A673 (cell line): ENCODE measurements at regions of chr10 and their contacts with region 1.

Region 1: DNA sequence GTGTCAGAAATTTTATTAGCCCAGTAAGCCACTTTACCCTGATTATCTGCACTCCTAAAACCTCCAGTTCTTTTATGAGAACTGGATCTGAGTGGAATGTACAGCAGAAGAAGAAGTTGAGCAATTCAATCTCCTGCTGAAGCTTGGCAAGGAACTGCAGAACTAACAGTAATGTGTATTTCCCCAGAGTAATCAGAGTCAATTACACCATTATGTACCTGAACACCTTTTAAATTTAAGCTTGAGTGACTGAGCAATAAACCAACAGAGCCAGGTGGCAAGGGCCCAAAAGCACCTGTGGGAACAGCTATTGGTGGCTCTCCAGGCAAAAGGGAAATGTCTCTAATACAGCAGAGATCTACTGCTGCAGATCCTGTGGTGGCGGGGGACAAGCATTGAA is 40.1 kb upstream of the AKR1C2 start:
- DNase-seq: peak; percentile 48
- H3K4me3 ChIP-seq: no peak overlapping the region
- H3K27ac ChIP-seq: peak overlapping the region; percentile 98
- H3K4me1 ChIP-seq: peaks cover 54% of the 10 kb centered on the region
- H3K27me3 ChIP-seq: no peaks in the 10 kb centered on the region
- CTCF ChIP-seq: no peak

Region 2: DNA sequence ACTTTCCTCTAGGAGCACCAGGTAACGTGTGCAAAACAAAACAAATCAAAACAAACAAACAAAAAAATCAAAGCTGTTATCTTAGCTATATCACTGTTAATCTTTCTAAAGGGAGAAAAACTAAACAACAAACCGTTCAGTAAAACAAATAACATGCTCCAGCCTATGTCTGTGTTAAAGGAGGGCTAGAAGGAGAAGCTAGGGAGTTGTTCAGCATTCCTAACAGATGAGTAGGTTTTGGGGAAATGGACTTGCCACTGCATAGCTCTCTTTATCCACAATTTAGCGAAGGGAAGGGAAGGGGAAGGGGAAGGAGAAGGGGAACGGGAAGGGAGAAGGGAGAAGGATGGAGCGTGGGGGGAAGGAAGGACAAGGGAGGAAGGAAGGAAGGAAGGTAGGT is 351.9 kb before region 1 on chr10:
- CTCF ChIA-PET with region 1: interaction called, 4 read pairs
- POLR2A ChIA-PET with region 1: no interaction called
- intact Hi-C with region 1: loop called (anchors 5 kb)
- DNase-seq: peak; percentile 81
- H3K4me3 ChIP-seq: no peak overlapping the region
- H3K27ac ChIP-seq: peak overlapping the region; percentile 76
- H3K4me1 ChIP-seq: peaks cover 12% of the 10 kb centered on the region
- H3K27me3 ChIP-seq: no peaks in the 10 kb centered on the region
- CTCF ChIP-seq: no peak

Region 3: GRCh38 chr10:4947635-4948596 is 95.8 kb before region 1 on chr10:
- CTCF ChIA-PET with region 1: no interaction called
- POLR2A ChIA-PET with region 1: no interaction called
- intact Hi-C with region 1: no loop called
- DNase-seq: no peak
- H3K4me3 ChIP-seq: no peak overlapping the region
- H3K27ac ChIP-seq: no peak overlapping the region
- H3K4me1 ChIP-seq: peaks cover 8% of the 10 kb centered on the region
- H3K27me3 ChIP-seq: no peaks in the 10 kb centered on the region
- CTCF ChIP-seq: no peak

Region 4: GRCh38 chr10:5094265-5095205 is 50.8 kb after region 1 on chr10 and contains the start of gene AKR1C3:
- CTCF ChIA-PET with region 1: interaction called, 4 read pairs
- POLR2A ChIA-PET with region 1: no interaction called
- intact Hi-C with region 1: loop called (anchors 2 kb)
- DNase-seq: peak; percentile 89
- H3K4me3 ChIP-seq: peak within 1 kb of the TSS; percentile 63
- H3K27ac ChIP-seq: peak within 1 kb of the TSS; percentile 83
- H3K4me1 ChIP-seq: peaks cover 4% of the 10 kb centered on the region
- H3K27me3 ChIP-seq: no peaks in the 10 kb centered on the region
- CTCF ChIP-seq: peak; percentile 80
- total RNA-seq, gene AKR1C3: 618 and 627 TPM in 2 replicates

Region 5: GRCh38 chr10:5283305-5284158 is 239.8 kb after region 1 on chr10:
- CTCF ChIA-PET with region 1: no interaction called
- POLR2A ChIA-PET with region 1: no interaction called
- intact Hi-C with region 1: loop called (anchors 2 kb)
- DNase-seq: peak; percentile 89
- H3K4me3 ChIP-seq: no peak overlapping the region
- H3K27ac ChIP-seq: peak overlapping the region; percentile 73
- H3K4me1 ChIP-seq: peaks cover 23% of the 10 kb centered on the region
- H3K27me3 ChIP-seq: no peaks in the 10 kb centered on the region
- CTCF ChIP-seq: peak; percentile 83

Region 6: GRCh38 chr10:5291501-5292195 is 247.9 kb after region 1 on chr10:
- CTCF ChIA-PET with region 1: no interaction called
- POLR2A ChIA-PET with region 1: no interaction called
- intact Hi-C with region 1: loop called (anchors 2 kb)
- DNase-seq: peak; percentile 96
- H3K4me3 ChIP-seq: no peak overlapping the region
- H3K27ac ChIP-seq: peak overlapping the region; percentile 92
- H3K4me1 ChIP-seq: peaks cover 37% of the 10 kb centered on the region
- H3K27me3 ChIP-seq: no peaks in the 10 kb centered on the region
- CTCF ChIP-seq: 0 out of 2 replicates have a peak, but pooled peaks have one; percentile 17

Region 7: DNA sequence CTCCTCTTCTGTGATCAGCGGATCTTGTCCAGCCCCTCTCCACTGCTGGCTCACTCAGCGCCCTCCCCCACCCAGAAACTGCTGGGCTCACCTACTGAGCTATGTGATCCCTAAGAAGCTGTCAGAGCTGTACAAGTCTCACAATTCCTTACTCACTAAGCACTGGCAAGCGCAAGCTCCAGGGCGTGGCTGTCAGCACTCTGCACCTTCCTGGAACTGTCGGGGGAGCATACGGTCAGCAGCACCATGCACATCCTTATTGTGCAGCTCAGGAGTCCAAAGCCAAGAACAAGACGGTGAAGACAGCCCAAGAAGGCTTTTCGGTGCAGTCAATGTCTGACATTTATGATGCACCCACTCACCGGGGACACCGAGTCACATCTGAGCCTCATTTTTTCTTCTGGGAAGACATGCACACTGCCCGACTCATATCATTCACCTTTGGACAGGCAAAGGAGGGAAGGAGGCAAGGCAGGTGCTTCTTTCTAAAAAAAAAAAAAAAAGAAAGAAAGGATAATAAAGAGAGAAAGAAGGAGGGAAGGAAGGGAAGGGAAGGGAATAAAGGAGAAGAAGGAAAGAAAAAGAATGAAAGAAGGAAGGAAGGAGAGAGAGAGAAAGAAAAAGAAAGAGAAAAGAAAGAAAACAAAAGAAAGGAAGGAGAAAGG is 566.4 kb after region 1 on chr10:
- CTCF ChIA-PET with region 1: no interaction called
- POLR2A ChIA-PET with region 1: no interaction called
- intact Hi-C with region 1: loop called (anchors 10 kb)
- DNase-seq: no peak
- H3K4me3 ChIP-seq: no peak overlapping the region
- H3K27ac ChIP-seq: no peak overlapping the region
- H3K4me1 ChIP-seq: no peaks in the 10 kb centered on the region
- H3K27me3 ChIP-seq: no peaks in the 10 kb centered on the region
- CTCF ChIP-seq: no peak